ENCODE measurements at regions of chr9 and their contacts with region 1.

Region 1: GRCh38 chr9:91245431-91246313 is 116.0 kb downstream of the AUH start:
- DNase-seq: peak; percentile 57
- ATAC-seq: peak; percentile 53; the same call in 1 of the 2 replicates
- H3K4me3 ChIP-seq: no peak overlapping the region
- H3K27ac ChIP-seq: 0 out of 2 replicates have a peak overlapping the region, but pooled peaks have one; percentile 8
- H3K4me1 ChIP-seq: peaks cover 18% of the 10 kb centered on the region
- H3K27me3 ChIP-seq: no peaks in the 10 kb centered on the region
- CTCF ChIP-seq: no peak
- POLR2A ChIP-seq: no peak
- RAD21 ChIP-seq: no peak

Region 2: GRCh38 chr9:91285729-91286353 is 40.2 kb after region 1 on chr9:
- CTCF ChIA-PET with region 1: no interaction called
- POLR2A ChIA-PET with region 1: no interaction called
- dilution Hi-C with region 1: no loop called
- in situ Hi-C with region 1: no loop called
- intact Hi-C with region 1: loop called (anchors 5 kb)
- DNase-seq: peak; percentile 54
- ATAC-seq: peak; percentile 51; the same call in 1 of the 2 replicates
- H3K4me3 ChIP-seq: no peak overlapping the region
- H3K27ac ChIP-seq: no peak overlapping the region
- H3K4me1 ChIP-seq: peaks cover 4% of the 10 kb centered on the region
- H3K27me3 ChIP-seq: no peaks in the 10 kb centered on the region
- CTCF ChIP-seq: no peak
- POLR2A ChIP-seq: no peak
- RAD21 ChIP-seq: no peak